GM10248 (cell line): ENCODE measurements at regions of chr14 and their contacts with region 1.

Region 1: GRCh38 chr14:59507063-59507780 is 22.9 kb downstream of the JKAMP start:
- DNase-seq: peak; percentile 40
- CTCF ChIP-seq: peak; percentile 78

Region 2: GRCh38 chr14:58607946-58608306 is 899.3 kb before region 1 on chr14:
- CTCF ChIA-PET with region 1: no interaction called
- POLR2A ChIA-PET with region 1: no interaction called
- DNase-seq: no peak
- CTCF ChIP-seq: no peak

Region 3: DNA sequence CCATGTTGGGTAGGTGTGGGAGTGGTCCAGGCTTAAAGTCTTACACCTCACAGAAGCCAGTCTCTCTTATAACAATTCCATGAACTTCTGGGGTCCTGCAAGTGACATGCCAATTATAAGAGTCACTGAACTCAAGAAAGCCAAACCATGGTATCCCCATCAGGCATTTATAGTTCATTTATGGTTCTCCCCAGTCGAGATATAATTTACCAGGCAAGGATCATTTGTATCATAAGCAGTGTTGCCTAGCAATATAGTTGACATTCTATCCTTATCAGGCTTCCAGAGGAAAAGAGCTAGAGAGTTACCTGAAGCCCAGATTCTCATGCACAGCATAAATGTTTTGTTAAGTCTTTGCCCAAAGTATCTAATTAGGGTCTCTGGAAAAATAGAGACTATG is 14.8 kb before region 1 on chr14:
- CTCF ChIA-PET with region 1: interaction called, 10 read pairs
- POLR2A ChIA-PET with region 1: no interaction called
- DNase-seq: no peak
- CTCF ChIP-seq: no peak

Region 4: GRCh38 chr14:59570114-59570513 is 62.9 kb after region 1 on chr14:
- CTCF ChIA-PET with region 1: interaction called, 10 read pairs
- POLR2A ChIA-PET with region 1: no interaction called
- DNase-seq: no peak
- CTCF ChIP-seq: no peak